Transverse colon (tissue), 4 donors: ENCODE measurements at regions of chr5 and their contacts with region 1.

Region 1: GRCh38 chr5:155943516-155944407 is 383.2 kb upstream of the SGCD start:
- DNase-seq: peak; percentile 50
- H3K4me3 ChIP-seq: no peak overlapping the region
- H3K27ac ChIP-seq: no peak overlapping the region
- H3K4me1 ChIP-seq: peaks cover 0 to 4% (median 0%) of the 10 kb centered on the region in 4 donors
- H3K27me3 ChIP-seq: no peaks in the 10 kb centered on the region
- CTCF ChIP-seq: peak; percentile 66 to 81 (median 71)
- EP300 ChIP-seq: no peak
- POLR2A ChIP-seq: no peak

Region 2: GRCh38 chr5:155827949-155828348 is 115.8 kb before region 1 on chr5:
- in situ Hi-C with region 1: no loop called
- intact Hi-C with region 1: no loop called
- DNase-seq: no peak
- H3K4me3 ChIP-seq: no peak overlapping the region
- H3K27ac ChIP-seq: no peak overlapping the region
- H3K4me1 ChIP-seq: no peaks in the 10 kb centered on the region
- H3K27me3 ChIP-seq: no peaks in the 10 kb centered on the region
- CTCF ChIP-seq: no peak
- EP300 ChIP-seq: no peak
- POLR2A ChIP-seq: no peak

Region 3: GRCh38 chr5:156815988-156816599 is 872.3 kb after region 1 on chr5:
- in situ Hi-C with region 1: loop called (anchors 10 to 25 kb)
- intact Hi-C with region 1: loop called (anchors 10 kb)
- DNase-seq: peak; percentile 17
- H3K4me3 ChIP-seq: no peak overlapping the region
- H3K27ac ChIP-seq: no peak overlapping the region
- H3K4me1 ChIP-seq: no peaks in the 10 kb centered on the region
- H3K27me3 ChIP-seq: no peaks in the 10 kb centered on the region
- CTCF ChIP-seq: peak; percentile 27 to 39 (median 37)
- EP300 ChIP-seq: no peak
- POLR2A ChIP-seq: no peak

Region 4: GRCh38 chr5:156824800-156825199 is 881.0 kb after region 1 on chr5:
- in situ Hi-C with region 1: loop called (anchors 10 to 25 kb)
- intact Hi-C with region 1: loop called (anchors 10 kb)
- DNase-seq: no peak
- H3K4me3 ChIP-seq: no peak overlapping the region
- H3K27ac ChIP-seq: no peak overlapping the region
- H3K4me1 ChIP-seq: no peaks in the 10 kb centered on the region
- H3K27me3 ChIP-seq: no peaks in the 10 kb centered on the region
- CTCF ChIP-seq: peak; percentile 26 to 36 (median 33)
- EP300 ChIP-seq: no peak
- POLR2A ChIP-seq: no peak